ENCODE measurements at regions of chr2 and their contacts with region 1.

Region 1: DNA sequence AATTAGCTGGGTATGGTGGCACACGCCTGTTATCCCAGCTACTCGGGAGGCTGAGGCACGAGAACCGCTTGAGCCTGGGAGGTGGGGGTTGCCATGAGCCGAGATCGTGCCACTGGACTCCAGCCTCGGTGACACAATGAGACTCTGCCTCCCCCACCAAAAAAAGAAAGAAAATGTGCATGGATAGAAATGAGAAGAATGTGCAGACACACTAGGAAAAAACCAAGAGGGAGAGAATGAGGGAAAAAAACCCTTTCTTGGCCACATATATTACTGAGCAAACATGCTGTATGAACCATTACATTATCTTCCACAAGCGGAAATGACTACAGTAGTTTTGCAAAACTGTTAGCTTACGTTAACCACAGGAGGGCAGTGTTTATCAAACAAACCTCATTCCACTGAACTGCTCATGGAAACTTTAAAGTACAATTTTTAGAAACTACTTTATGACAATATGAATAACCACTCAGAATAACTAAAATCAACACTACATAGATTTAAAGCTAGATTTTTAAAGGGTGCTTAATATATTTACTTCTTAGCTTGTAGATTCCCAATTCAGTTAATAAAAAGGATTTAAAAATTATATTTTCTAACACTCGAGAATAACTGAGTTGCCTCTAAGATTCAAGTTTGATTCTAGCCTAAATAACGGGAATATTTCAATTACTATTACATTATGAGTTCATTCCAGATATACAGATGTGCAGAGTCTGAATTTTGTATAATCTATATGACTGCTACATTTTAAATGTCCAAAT is 26.4 kb downstream of the ASXL2 start:
- DNase-seq: peak; percentile 71
- ATAC-seq: peak; percentile 95
- H3K4me3 ChIP-seq: no peak overlapping the region
- H3K4me3 Mint-ChIP-seq: peak overlapping the region; percentile 40
- H3K27ac ChIP-seq: peak overlapping the region in 1 of 2 donors; percentile 45
- H3K27ac Mint-ChIP-seq: peak overlapping the region; percentile 39
- H3K4me1 ChIP-seq: peaks cover 11 to 14% of the 10 kb centered on the region in 2 donors
- H3K4me1 Mint-ChIP-seq: peaks cover 32% of the 10 kb centered on the region
- H3K27me3 ChIP-seq: no peaks in the 10 kb centered on the region
- H3K27me3 Mint-ChIP-seq: no peaks in the 10 kb centered on the region
- CTCF ChIP-seq: peak; percentile 83

Region 2: GRCh38 chr2:25690058-25690457 is 161.9 kb before region 1 on chr2:
- CTCF ChIA-PET with region 1: no interaction called
- POLR2A ChIA-PET with region 1: no interaction called
- intact Hi-C with region 1: no loop called
- DNase-seq: no peak
- ATAC-seq: no peak
- H3K4me3 ChIP-seq: no peak overlapping the region
- H3K4me3 Mint-ChIP-seq: no peak overlapping the region
- H3K27ac ChIP-seq: no peak overlapping the region
- H3K27ac Mint-ChIP-seq: no peak overlapping the region
- H3K4me1 ChIP-seq: no peaks in the 10 kb centered on the region
- H3K4me1 Mint-ChIP-seq: no peaks in the 10 kb centered on the region
- H3K27me3 ChIP-seq: peaks cover 0 to 3% (median 0%) of the 10 kb centered on the region in 4 experiments
- H3K27me3 Mint-ChIP-seq: peaks cover 7% of the 10 kb centered on the region
- CTCF ChIP-seq: no peak

Region 3: DNA sequence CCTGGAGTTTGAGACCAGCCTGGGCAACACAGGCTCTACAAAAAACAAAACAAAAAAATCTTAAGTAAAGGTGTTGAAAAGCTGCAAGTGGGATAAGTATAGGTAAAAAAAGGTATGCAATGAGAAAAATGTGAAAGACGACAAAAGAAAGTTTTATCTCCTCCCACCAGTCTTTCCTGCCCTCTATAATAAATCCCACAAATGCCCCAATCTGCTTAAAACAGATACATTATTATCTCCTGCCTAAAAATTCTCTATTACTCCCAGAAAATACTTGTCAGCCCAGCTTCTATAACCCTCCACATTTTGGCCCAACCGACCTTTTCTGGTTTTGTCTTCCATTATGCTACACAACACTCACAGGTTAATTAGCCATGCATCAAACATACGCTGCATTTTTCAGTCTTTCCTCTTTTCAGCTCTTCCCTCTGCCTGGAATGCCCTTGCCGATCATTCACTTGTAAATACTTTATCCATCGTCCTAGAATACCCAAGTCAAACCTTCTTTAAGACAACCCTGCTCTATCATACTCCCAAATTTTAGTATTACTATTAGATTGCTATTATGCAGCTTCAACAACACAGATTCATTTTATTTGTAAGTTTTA is 15.6 kb after region 1 on chr2:
- CTCF ChIA-PET with region 1: interaction called, 18 read pairs
- POLR2A ChIA-PET with region 1: interaction called, 3 read pairs
- intact Hi-C with region 1: no loop called
- DNase-seq: no peak
- ATAC-seq: no peak
- H3K4me3 ChIP-seq: no peak overlapping the region
- H3K4me3 Mint-ChIP-seq: no peak overlapping the region
- H3K27ac ChIP-seq: no peak overlapping the region
- H3K27ac Mint-ChIP-seq: no peak overlapping the region
- H3K4me1 ChIP-seq: no peaks in the 10 kb centered on the region
- H3K4me1 Mint-ChIP-seq: peaks cover 11% of the 10 kb centered on the region
- H3K27me3 ChIP-seq: no peaks in the 10 kb centered on the region
- H3K27me3 Mint-ChIP-seq: no peaks in the 10 kb centered on the region
- CTCF ChIP-seq: no peak

Region 4: GRCh38 chr2:26495705-26496297 is 643.9 kb after region 1 on chr2:
- CTCF ChIA-PET with region 1: no interaction called
- POLR2A ChIA-PET with region 1: no interaction called
- intact Hi-C with region 1: no loop called
- DNase-seq: no peak
- ATAC-seq: no peak
- H3K4me3 ChIP-seq: no peak overlapping the region
- H3K4me3 Mint-ChIP-seq: no peak overlapping the region
- H3K27ac ChIP-seq: no peak overlapping the region
- H3K27ac Mint-ChIP-seq: no peak overlapping the region
- H3K4me1 ChIP-seq: no peaks in the 10 kb centered on the region
- H3K4me1 Mint-ChIP-seq: peaks cover 2% of the 10 kb centered on the region
- H3K27me3 ChIP-seq: peaks cover 0 to 3% (median 0%) of the 10 kb centered on the region in 4 experiments
- H3K27me3 Mint-ChIP-seq: peaks cover 18% of the 10 kb centered on the region
- CTCF ChIP-seq: no peak